ENCODE measurements at regions of chr11 and their contacts with region 1.

Region 1: GRCh38 chr11:119666463-119667131 is 62.4 kb downstream of the NECTIN1 start:
- DNase-seq: peak in 8 of 9 donors; percentile 11 to 62 (median 44)
- ATAC-seq: peak; percentile 87
- H3K4me3 ChIP-seq: no peak overlapping the region
- H3K4me3 Mint-ChIP-seq: no peak overlapping the region
- H3K27ac ChIP-seq: no peak overlapping the region
- H3K27ac Mint-ChIP-seq: no peak overlapping the region
- H3K4me1 ChIP-seq: no peaks in the 10 kb centered on the region
- H3K4me1 Mint-ChIP-seq: peaks cover 0 to 5% (median 0%) of the 10 kb centered on the region in 7 donors
- H3K27me3 ChIP-seq: no peaks in the 10 kb centered on the region
- H3K27me3 Mint-ChIP-seq: no peaks in the 10 kb centered on the region

Region 2: DNA sequence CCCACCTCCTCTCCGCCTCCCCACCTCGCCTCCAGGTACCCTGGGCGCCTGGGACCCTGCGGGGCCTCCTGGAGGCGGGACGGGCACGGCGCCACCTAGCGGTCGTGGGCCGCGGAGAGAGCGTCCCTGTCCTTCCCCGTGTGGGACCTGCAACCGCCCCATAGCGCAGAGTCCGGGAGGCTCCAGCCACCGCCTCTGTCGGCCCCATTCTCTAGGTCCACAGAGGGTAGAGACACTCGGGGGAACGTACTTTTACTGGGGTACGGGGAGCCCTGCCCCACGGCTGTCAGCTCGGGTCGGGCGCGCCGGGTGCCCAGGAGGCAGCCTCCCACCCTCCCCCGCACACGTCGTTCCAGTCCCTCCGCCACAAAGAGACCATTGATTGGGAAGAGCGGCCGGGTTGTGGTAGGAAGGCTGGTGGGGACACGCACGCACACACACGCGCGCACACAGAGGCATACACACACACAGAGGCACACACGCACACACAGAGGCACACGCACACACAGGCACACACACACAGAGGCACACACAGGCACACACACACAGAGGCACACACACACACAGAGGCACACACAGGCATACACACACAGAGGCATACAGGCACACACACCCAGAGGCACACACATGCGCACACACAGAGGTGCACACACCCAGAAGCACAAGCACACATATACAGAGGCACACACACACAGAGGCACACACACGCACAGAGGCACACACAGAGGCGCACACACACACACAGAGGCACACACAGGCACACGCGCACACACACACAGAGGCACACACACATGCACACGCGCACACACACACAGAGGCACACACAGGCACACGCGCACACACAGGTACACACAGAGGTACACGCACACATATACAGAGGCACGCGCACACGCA is 75.0 kb after region 1 on chr11:
- CTCF ChIA-PET with region 1: interaction called, 4 read pairs
- POLR2A ChIA-PET with region 1: no interaction called
- intact Hi-C with region 1: loop called in 1 of 2 experiments (anchors 1 kb)
- DNase-seq: peak in 7 of 9 donors; percentile 42 to 71 (median 57)
- ATAC-seq: peak; percentile 79
- H3K4me3 ChIP-seq: no peak overlapping the region
- H3K4me3 Mint-ChIP-seq: peak overlapping the region in 9 of 10 donors; percentile 6 to 85 (median 71)
- H3K27ac ChIP-seq: no peak overlapping the region
- H3K27ac Mint-ChIP-seq: peak overlapping the region in 2 of 9 donors; percentile 56 to 76
- H3K4me1 ChIP-seq: peaks cover 0 to 4% of the 10 kb centered on the region in 2 donors
- H3K4me1 Mint-ChIP-seq: peaks cover 6 to 16% (median 11%) of the 10 kb centered on the region in 7 donors
- H3K27me3 ChIP-seq: no peaks in the 10 kb centered on the region
- H3K27me3 Mint-ChIP-seq: peaks cover 42 to 62% (median 44%) of the 10 kb centered on the region in 5 donors

Region 3: GRCh38 chr11:120108154-120108865 is 441.7 kb after region 1 on chr11:
- CTCF ChIA-PET with region 1: interaction called, 3 read pairs
- POLR2A ChIA-PET with region 1: no interaction called
- intact Hi-C with region 1: loop called in 1 of 2 experiments (anchors 1 kb)
- DNase-seq: peak in 8 of 9 donors; percentile 5 to 65 (median 35)
- ATAC-seq: peak; percentile 75
- H3K4me3 ChIP-seq: no peak overlapping the region
- H3K4me3 Mint-ChIP-seq: no peak overlapping the region
- H3K27ac ChIP-seq: no peak overlapping the region
- H3K27ac Mint-ChIP-seq: no peak overlapping the region
- H3K4me1 ChIP-seq: no peaks in the 10 kb centered on the region
- H3K4me1 Mint-ChIP-seq: no peaks in the 10 kb centered on the region
- H3K27me3 ChIP-seq: no peaks in the 10 kb centered on the region
- H3K27me3 Mint-ChIP-seq: peaks cover 0 to 15% (median 7%) of the 10 kb centered on the region in 5 donors